ENCODE measurements at regions of chr2 and their contacts with region 1.

Region 1: GRCh38 chr2:200578778-200579177 is 7.0 kb upstream of the AOX1 start:
- DNase-seq: peak in 4 of 9 donors; percentile 3 to 13 (median 10)
- ATAC-seq: peak; percentile 64
- H3K4me3 ChIP-seq: no peak overlapping the region
- H3K4me3 Mint-ChIP-seq: no peak overlapping the region
- H3K27ac ChIP-seq: no peak overlapping the region
- H3K27ac Mint-ChIP-seq: no peak overlapping the region
- H3K4me1 ChIP-seq: no peaks in the 10 kb centered on the region
- H3K4me1 Mint-ChIP-seq: peaks cover 0 to 15% (median 0%) of the 10 kb centered on the region in 7 donors
- H3K27me3 ChIP-seq: no peaks in the 10 kb centered on the region
- H3K27me3 Mint-ChIP-seq: peaks cover 0 to 5% (median 4%) of the 10 kb centered on the region in 5 donors

Region 2: GRCh38 chr2:200703127-200703925 is 124.5 kb after region 1 on chr2:
- CTCF ChIA-PET with region 1: no interaction called
- POLR2A ChIA-PET with region 1: no interaction called
- intact Hi-C with region 1: loop called (anchors 1 kb)
- DNase-seq: peak in 4 of 9 donors; percentile 9 to 35 (median 28)
- ATAC-seq: peak; percentile 6
- H3K4me3 ChIP-seq: no peak overlapping the region
- H3K4me3 Mint-ChIP-seq: peak overlapping the region in 1 of 10 donors; percentile 22
- H3K27ac ChIP-seq: no peak overlapping the region
- H3K27ac Mint-ChIP-seq: peak overlapping the region in 3 of 9 donors; percentile 5 to 68 (median 8)
- H3K4me1 ChIP-seq: no peaks in the 10 kb centered on the region
- H3K4me1 Mint-ChIP-seq: peaks cover 0 to 28% (median 4%) of the 10 kb centered on the region in 7 donors
- H3K27me3 ChIP-seq: no peaks in the 10 kb centered on the region
- H3K27me3 Mint-ChIP-seq: peaks cover 0 to 5% (median 2%) of the 10 kb centered on the region in 5 donors

Region 3: DNA sequence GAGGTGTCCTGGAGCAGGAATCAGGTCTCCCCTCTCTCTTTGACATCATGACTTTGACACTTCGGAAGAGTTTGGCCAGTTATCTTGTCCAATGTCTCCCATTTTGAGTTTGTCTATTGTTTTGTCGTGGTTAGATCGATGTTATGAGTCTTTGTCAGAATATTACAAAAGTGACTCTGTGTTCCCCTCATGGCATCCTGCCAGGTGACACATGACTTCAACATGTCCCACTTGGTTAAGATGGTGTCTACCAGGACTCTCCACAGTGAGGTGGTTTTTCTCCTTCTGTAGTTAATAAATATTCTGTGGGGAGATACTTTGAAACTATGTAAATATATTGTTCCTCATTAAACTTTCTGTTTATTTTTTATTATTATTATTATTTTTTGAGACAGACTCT is 156.3 kb after region 1 on chr2:
- CTCF ChIA-PET with region 1: interaction called, 5 read pairs
- POLR2A ChIA-PET with region 1: no interaction called
- intact Hi-C with region 1: loop called in 1 of 2 experiments (anchors 2 kb)
- DNase-seq: no peak
- ATAC-seq: no peak
- H3K4me3 ChIP-seq: no peak overlapping the region
- H3K4me3 Mint-ChIP-seq: no peak overlapping the region
- H3K27ac ChIP-seq: no peak overlapping the region
- H3K27ac Mint-ChIP-seq: no peak overlapping the region
- H3K4me1 ChIP-seq: no peaks in the 10 kb centered on the region
- H3K4me1 Mint-ChIP-seq: peaks cover 0 to 11% (median 0%) of the 10 kb centered on the region in 7 donors
- H3K27me3 ChIP-seq: no peaks in the 10 kb centered on the region
- H3K27me3 Mint-ChIP-seq: peaks cover 2 to 6% (median 4%) of the 10 kb centered on the region in 5 donors